ENCODE measurements at regions of chr12 and their contacts with region 1.

Region 1: DNA sequence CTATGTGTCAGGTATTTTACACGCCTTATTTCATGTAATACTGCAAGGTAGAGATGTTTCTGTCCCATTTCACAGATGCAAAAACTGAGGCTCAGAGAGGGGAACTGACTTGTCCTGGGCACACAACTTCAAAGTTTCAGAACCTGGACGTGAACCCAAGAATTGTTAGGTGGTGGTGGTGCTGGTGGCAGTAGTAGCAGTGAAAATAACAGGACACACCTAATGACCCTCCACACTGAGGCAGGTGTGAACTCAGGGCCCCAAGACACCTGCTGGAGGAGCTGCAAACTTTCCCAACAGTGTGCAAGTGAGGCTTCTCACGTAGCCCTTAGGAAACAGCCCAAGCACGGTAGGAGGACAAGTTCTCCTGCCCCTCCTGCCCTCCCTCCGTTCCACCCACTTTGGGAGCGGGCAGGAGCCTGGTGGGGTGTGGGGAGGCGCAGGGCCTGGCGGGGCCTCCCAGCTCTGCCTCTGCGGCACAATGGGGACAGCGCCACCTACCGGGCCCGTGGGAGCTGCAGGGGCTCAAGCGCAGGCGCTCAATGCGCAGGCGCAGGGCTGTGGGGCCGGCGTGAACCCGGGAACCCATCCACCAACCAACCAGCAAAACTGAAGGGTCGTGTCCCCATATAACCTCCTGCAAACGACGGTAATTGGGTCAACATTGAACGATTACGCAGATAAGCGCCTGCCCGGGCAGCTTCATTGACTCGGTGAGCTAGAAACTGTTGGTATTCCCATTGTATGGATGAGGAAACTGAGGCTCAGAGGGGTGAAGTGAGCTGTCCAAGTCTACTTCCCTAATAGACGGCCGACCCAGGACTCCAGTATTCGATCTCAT is 12.0 kb upstream of the TRPV4 start:
- DNase-seq: peak; percentile 87 to 93 (median 90)
- ATAC-seq: peak; percentile 96
- H3K4me3 ChIP-seq: no peak overlapping the region
- H3K27ac ChIP-seq: no peak overlapping the region
- H3K4me1 ChIP-seq: peaks cover 10% of the 10 kb centered on the region
- H3K27me3 ChIP-seq: no peaks in the 10 kb centered on the region
- CTCF ChIP-seq: peak; percentile 97 to 100 (median 99)
- POLR2A ChIP-seq: no peak

Region 2: DNA sequence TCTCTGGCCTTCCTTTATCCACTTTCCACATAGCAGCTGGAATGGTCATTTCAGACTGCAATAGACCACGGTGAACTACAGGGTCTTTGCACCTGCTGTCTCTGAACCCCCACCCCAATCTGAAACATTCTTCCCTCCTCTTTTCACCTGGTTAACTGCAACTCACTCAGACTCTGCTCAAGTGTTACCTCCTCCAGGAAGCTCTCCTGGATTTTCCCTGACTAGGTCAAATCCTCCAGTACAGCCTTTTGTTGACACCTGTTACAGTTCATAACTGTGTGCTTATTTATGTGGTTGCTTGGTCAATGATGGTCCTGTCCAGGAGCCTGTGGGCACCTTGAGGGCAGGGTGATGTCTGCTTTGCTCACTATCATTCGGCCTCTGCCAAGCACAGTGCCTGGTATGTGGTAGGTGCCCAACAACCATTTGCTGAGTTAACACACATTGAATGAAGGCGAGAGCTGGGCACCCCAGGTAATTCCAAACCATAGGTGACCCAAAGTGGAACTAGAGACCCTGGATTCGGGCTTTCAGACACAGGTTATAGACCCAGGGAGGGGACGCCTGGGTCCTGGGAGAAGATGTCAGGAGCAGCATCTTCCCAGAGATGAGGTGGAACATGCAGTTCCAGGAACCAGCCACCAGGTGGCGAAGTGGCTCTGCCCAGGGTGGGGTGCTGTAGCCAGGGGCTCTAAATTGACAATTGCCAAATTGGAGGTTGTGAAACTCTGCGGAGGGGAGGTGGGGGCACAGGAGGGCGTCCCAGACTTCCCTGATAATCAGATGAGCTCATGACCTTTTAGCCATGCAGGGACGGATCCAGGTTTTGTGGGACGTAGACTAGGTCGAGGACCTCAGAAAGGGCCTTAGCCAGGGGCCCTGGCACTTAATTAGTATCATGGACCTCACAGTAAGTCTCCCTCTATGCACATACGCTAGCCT is 40.1 kb before region 1 on chr12:
- intact Hi-C with region 1: loop called (anchors 5 kb)
- DNase-seq: peak; percentile 58 to 68 (median 64)
- ATAC-seq: peak; percentile 76
- H3K4me3 ChIP-seq: no peak overlapping the region
- H3K27ac ChIP-seq: no peak overlapping the region
- H3K4me1 ChIP-seq: no peaks in the 10 kb centered on the region
- H3K27me3 ChIP-seq: no peaks in the 10 kb centered on the region
- CTCF ChIP-seq: peak; percentile 87 to 94 (median 91)
- POLR2A ChIP-seq: no peak

Region 3: GRCh38 chr12:109899783-109900751 is 54.9 kb after region 1 on chr12 and contains the start of gene TCHP:
- intact Hi-C with region 1: loop called (anchors 5 kb)
- DNase-seq: peak; percentile 85 to 92 (median 89)
- ATAC-seq: peak; percentile 98
- H3K4me3 ChIP-seq: peak within 1 kb of the TSS; percentile 44 to 89
- H3K27ac ChIP-seq: peak within 1 kb of the TSS; percentile 52 to 82 (median 78)
- H3K4me1 ChIP-seq: peaks cover 24% of the 10 kb centered on the region
- H3K27me3 ChIP-seq: no peaks in the 10 kb centered on the region
- CTCF ChIP-seq: peak in 6 of 7 experiments; percentile 12 to 66 (median 47)
- POLR2A ChIP-seq: peak; percentile 30 to 73 (median 63)
- total RNA-seq, gene TCHP: 29.3 to 72.2 TPM

Measured in body of pancreas (tissue), 4 donors.